ENCODE measurements at regions of chr4 and their contacts with region 1.

Region 1: DNA sequence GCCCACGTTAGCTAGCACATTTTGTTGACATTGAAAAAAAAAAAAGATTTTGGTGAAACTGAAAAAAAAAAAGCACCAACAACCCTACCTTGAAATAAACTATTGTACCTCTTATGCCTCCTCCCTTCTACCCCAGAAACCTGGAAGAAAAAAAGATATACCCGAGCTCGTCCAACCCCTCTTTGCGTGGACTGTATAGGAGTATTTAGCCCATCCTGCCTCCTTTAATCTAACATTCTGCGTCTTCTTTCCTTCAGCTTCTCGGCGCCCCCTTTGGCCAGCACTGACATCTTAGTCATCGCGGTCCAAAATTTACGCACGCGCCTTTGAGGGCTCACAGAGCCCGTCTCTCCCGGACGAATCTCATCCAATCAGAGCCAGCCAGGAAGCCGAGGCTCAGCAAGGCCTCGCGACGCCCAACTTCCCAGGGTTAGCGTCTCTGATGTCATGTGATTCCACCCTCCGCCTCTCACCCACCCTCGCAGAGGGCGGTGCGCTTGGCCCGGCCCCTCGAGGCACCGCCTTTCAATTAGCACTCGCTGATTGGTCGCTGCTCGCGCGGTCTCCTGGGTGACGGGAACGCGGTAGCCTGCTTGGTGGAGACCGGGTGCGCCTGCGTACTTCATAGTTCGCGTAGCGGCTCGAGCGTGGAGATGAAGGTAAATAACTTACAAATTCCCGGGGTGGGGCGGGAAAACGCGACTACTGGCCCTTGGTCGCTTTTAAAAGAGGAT is at the start of gene WDR19:
- DNase-seq: peak; percentile 97 to 100 (median 98)
- ATAC-seq: peak; percentile 93
- H3K4me3 ChIP-seq: peak within 1 kb of the TSS; percentile 82 to 92
- H3K4me3 Mint-ChIP-seq: peak within 1 kb of the TSS; percentile 43
- H3K27ac ChIP-seq: peak within 1 kb of the TSS; percentile 56 to 63
- H3K27ac Mint-ChIP-seq: no peak within 1 kb of the TSS
- H3K4me1 ChIP-seq: peaks cover 10% of the 10 kb centered on the region
- H3K4me1 Mint-ChIP-seq: peaks cover 6% of the 10 kb centered on the region
- H3K27me3 ChIP-seq: peaks cover 0 to 2% of the 10 kb centered on the region in 2 experiments
- H3K27me3 Mint-ChIP-seq: peaks cover 4% of the 10 kb centered on the region
- CTCF ChIP-seq: peak; percentile 64
- total RNA-seq, gene WDR19: 10.8 to 11.9 TPM

Region 2: DNA sequence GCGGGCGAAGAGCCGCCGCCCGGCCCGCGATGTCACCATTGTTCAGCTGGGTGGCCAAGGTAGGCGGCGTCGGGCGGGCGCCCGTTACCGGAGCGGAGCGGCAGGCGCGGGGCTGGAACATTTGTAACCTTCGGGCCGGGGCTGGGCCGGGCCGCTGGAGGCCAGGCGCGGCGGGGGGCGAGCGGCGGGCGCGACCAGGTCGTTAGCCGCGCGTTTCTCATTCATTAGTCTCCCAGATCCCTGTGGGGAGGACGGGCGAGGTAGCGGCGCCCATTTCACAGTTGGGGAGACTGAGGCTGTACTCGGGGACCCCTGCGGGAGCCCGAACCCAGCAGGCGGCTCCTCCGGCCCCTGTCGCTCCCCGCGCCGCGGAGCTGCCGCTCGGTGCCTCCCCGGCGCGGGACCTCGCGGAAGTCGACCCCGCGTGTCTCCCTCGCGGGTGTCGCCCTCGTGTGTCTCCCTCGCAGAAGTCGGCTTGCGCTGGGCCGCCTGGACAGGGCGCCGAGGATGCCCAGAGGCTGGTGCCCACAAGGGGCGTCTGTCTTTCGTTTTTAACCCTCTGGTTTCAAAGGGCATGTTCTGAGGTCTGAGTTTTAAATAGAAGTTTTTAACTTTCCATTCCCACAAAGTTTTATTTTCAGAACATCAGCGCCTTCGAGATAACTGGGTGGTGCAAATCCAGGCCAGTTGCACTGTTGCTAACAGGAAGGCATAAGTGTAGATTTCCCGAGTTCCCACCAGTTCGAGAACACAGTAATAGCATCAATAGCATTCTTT is 1204.4 kb before region 1 on chr4:
- CTCF ChIA-PET with region 1: no interaction called
- POLR2A ChIA-PET with region 1: no interaction called
- intact Hi-C with region 1: loop called (anchors 5 to 10 kb)
- DNase-seq: peak; percentile 48 to 90 (median 76)
- ATAC-seq: peak; percentile 73
- H3K4me3 ChIP-seq: peak overlapping the region; percentile 40 to 48
- H3K4me3 Mint-ChIP-seq: peak overlapping the region; percentile 87
- H3K27ac ChIP-seq: peak overlapping the region; percentile 57 to 66
- H3K27ac Mint-ChIP-seq: peak overlapping the region; percentile 74
- H3K4me1 ChIP-seq: peaks cover 18% of the 10 kb centered on the region
- H3K4me1 Mint-ChIP-seq: peaks cover 28% of the 10 kb centered on the region
- H3K27me3 ChIP-seq: no peaks in the 10 kb centered on the region
- H3K27me3 Mint-ChIP-seq: no peaks in the 10 kb centered on the region
- CTCF ChIP-seq: peak; percentile 65

Region 3: DNA sequence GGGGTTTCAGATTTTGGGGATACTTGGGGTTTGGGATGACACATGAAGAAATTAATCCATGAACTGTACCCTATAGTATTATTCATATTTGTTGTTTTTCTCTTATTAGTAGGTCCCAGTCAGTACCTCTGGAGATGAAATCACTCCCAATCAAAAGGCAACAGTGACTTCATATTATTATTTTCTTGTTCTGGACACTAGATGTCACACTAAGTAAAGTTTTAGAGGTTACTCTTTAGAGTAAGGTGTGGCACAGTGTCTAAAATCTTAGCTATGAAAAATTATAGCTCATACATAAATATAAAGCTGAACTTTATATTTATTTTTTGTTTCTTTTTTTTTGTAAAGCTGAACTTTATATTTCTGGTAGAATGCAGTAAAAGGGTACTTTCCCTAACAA is 279.4 kb before region 1 on chr4:
- CTCF ChIA-PET with region 1: interaction called, 4 read pairs
- POLR2A ChIA-PET with region 1: interaction called, 6 read pairs
- intact Hi-C with region 1: loop called in 1 of 2 experiments (anchors 1 kb)
- DNase-seq: peak in 2 of 9 experiments; percentile 52 to 68
- ATAC-seq: peak; percentile 87
- H3K4me3 ChIP-seq: no peak overlapping the region
- H3K4me3 Mint-ChIP-seq: no peak overlapping the region
- H3K27ac ChIP-seq: no peak overlapping the region
- H3K27ac Mint-ChIP-seq: no peak overlapping the region
- H3K4me1 ChIP-seq: no peaks in the 10 kb centered on the region
- H3K4me1 Mint-ChIP-seq: peaks cover 4% of the 10 kb centered on the region
- H3K27me3 ChIP-seq: no peaks in the 10 kb centered on the region
- H3K27me3 Mint-ChIP-seq: peaks cover 2% of the 10 kb centered on the region
- CTCF ChIP-seq: peak; percentile 71

Region 4: GRCh38 chr4:39353478-39354253 is 171.6 kb after region 1 on chr4:
- CTCF ChIA-PET with region 1: no interaction called
- POLR2A ChIA-PET with region 1: no interaction called
- intact Hi-C with region 1: loop called in 1 of 2 experiments (anchors 5 kb)
- DNase-seq: peak in 2 of 9 experiments; percentile 58 to 77
- ATAC-seq: peak; percentile 83
- H3K4me3 ChIP-seq: peak overlapping the region; percentile 40 to 44
- H3K4me3 Mint-ChIP-seq: peak overlapping the region; percentile 86
- H3K27ac ChIP-seq: peak overlapping the region; percentile 71 to 89
- H3K27ac Mint-ChIP-seq: peak overlapping the region; percentile 98
- H3K4me1 ChIP-seq: peaks cover 21% of the 10 kb centered on the region
- H3K4me1 Mint-ChIP-seq: peaks cover 63% of the 10 kb centered on the region
- H3K27me3 ChIP-seq: no peaks in the 10 kb centered on the region
- H3K27me3 Mint-ChIP-seq: no peaks in the 10 kb centered on the region
- CTCF ChIP-seq: no peak

Region 5: GRCh38 chr4:39527273-39528060 is 345.4 kb after region 1 on chr4 and contains the start of gene UGDH:
- CTCF ChIA-PET with region 1: no interaction called
- POLR2A ChIA-PET with region 1: no interaction called
- intact Hi-C with region 1: loop called (anchors 1 to 5 kb)
- DNase-seq: peak; percentile 81 to 96 (median 90)
- ATAC-seq: peak; percentile 98
- H3K4me3 ChIP-seq: peak within 1 kb of the TSS; percentile 87 to 89
- H3K4me3 Mint-ChIP-seq: peak within 1 kb of the TSS; percentile 96
- H3K27ac ChIP-seq: peak within 1 kb of the TSS; percentile 68 to 74
- H3K27ac Mint-ChIP-seq: peak within 1 kb of the TSS; percentile 93
- H3K4me1 ChIP-seq: peaks cover 17% of the 10 kb centered on the region
- H3K4me1 Mint-ChIP-seq: peaks cover 24% of the 10 kb centered on the region
- H3K27me3 ChIP-seq: no peaks in the 10 kb centered on the region
- H3K27me3 Mint-ChIP-seq: no peaks in the 10 kb centered on the region
- CTCF ChIP-seq: no peak
- total RNA-seq, gene UGDH: 2.6 to 3.6 TPM